IMR-90 (cell line): ENCODE measurements at regions of chr1 and their contacts with region 1.

Region 1: GRCh38 chr1:246012341-246012740 is 494.7 kb downstream of the SMYD3 start:
- DNase-seq: peak; percentile 51
- ATAC-seq: peak; percentile 53
- H3K4me3 ChIP-seq: no peak overlapping the region
- H3K27ac ChIP-seq: no peak overlapping the region
- H3K4me1 ChIP-seq: no peaks in the 10 kb centered on the region
- H3K27me3 ChIP-seq: no peaks in the 10 kb centered on the region
- CTCF ChIP-seq: peak; percentile 65
- POLR2A ChIP-seq: no peak
- RAD21 ChIP-seq: peak; percentile 68

Region 2: DNA sequence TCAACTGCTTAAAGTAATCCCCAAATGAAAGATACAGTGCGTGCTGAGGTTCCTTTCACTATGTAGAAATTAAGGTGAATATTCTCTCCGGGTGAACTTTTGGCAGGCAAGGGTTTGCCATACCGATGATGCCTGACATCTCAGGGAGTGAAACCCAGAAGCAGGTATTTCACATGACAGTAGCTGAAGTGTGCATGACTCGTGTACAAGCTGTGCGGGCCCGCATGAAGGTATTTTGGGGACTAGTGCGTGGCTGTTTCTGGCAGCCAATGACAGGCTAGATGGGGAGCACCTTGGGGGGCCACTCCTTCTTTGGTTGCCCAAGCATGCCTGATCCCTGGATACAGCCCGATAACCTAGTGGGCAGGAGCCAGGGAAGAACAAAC is 74.3 kb before region 1 on chr1:
- CTCF ChIA-PET with region 1: no interaction called
- POLR2A ChIA-PET with region 1: no interaction called
- dilution Hi-C with region 1: no loop called
- in situ Hi-C with region 1: no loop called
- intact Hi-C with region 1: no loop called
- DNase-seq: no peak
- ATAC-seq: no peak
- H3K4me3 ChIP-seq: no peak overlapping the region
- H3K27ac ChIP-seq: no peak overlapping the region
- H3K4me1 ChIP-seq: no peaks in the 10 kb centered on the region
- H3K27me3 ChIP-seq: no peaks in the 10 kb centered on the region
- CTCF ChIP-seq: no peak
- POLR2A ChIP-seq: no peak
- RAD21 ChIP-seq: no peak

Region 3: DNA sequence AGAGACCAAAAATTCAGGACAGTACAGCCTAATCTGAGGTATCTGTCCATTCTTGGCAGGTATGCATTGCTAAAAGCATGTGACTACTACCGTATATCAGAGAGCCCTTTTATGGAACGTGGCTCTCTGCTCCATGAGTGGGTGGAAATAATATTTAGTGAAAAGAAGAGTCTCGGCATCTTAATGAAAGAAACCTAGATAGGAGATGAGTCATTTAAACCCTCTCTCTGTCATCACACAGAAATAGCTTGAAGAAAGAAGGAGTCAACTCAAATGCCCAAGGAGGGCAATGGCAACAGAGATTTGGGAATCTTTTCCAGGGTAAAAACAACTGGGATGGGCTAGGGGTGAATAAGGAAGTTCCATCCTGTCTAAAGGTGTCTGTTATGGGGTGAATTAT is 33.4 kb before region 1 on chr1:
- CTCF ChIA-PET with region 1: no interaction called
- POLR2A ChIA-PET with region 1: no interaction called
- dilution Hi-C with region 1: no loop called
- in situ Hi-C with region 1: no loop called
- intact Hi-C with region 1: no loop called
- DNase-seq: peak; percentile 66
- ATAC-seq: peak; percentile 72
- H3K4me3 ChIP-seq: no peak overlapping the region
- H3K27ac ChIP-seq: no peak overlapping the region
- H3K4me1 ChIP-seq: peaks cover 13% of the 10 kb centered on the region
- H3K27me3 ChIP-seq: no peaks in the 10 kb centered on the region
- CTCF ChIP-seq: no peak
- POLR2A ChIP-seq: no peak
- RAD21 ChIP-seq: no peak

Region 4: DNA sequence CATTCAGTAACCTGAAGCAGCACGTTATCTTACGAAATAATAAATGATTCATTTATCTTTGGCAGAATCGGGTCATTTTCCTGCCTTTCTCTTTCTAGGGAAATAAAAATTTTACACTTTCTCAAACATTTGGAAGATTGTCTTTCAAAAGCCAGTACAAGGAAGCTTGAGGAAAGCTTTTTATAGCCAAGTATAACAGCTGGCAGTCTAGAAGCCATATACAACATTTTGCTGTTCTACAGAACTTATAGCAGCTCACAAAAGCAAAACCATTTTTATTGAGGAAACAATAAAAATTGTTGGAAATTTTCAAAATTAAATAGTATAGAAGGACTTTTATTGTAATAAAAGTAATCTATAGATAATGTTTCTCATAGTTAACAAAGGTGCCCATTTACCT is 46.1 kb after region 1 on chr1:
- CTCF ChIA-PET with region 1: no interaction called
- POLR2A ChIA-PET with region 1: no interaction called
- dilution Hi-C with region 1: no loop called
- in situ Hi-C with region 1: no loop called
- intact Hi-C with region 1: no loop called
- DNase-seq: peak; percentile 6
- ATAC-seq: no peak
- H3K4me3 ChIP-seq: no peak overlapping the region
- H3K27ac ChIP-seq: no peak overlapping the region
- H3K4me1 ChIP-seq: no peaks in the 10 kb centered on the region
- H3K27me3 ChIP-seq: no peaks in the 10 kb centered on the region
- CTCF ChIP-seq: no peak
- POLR2A ChIP-seq: no peak
- RAD21 ChIP-seq: no peak

Region 5: DNA sequence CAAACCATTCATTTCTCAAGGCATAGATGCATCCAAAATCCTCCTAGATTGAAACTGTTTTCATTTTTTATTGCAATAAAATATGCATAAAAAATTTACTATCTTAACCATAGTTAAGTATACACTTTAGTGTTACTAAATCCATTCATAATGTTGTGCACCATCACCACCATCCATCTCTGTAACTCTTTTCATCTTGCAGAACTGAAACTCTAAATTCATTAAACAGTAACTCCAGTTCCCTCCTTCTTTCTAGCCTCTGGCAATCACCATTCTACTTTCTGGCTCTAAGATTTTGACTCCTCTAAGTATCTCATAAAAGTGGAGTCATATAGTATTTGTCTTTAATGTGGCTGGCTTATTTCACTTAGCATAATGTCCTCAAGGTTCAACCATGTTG is 257.9 kb after region 1 on chr1:
- CTCF ChIA-PET with region 1: no interaction called
- POLR2A ChIA-PET with region 1: no interaction called
- dilution Hi-C with region 1: no loop called
- in situ Hi-C with region 1: loop called (anchors 10 kb)
- intact Hi-C with region 1: no loop called
- DNase-seq: no peak
- ATAC-seq: no peak
- H3K4me3 ChIP-seq: no peak overlapping the region
- H3K27ac ChIP-seq: no peak overlapping the region
- H3K4me1 ChIP-seq: no peaks in the 10 kb centered on the region
- H3K27me3 ChIP-seq: no peaks in the 10 kb centered on the region
- CTCF ChIP-seq: no peak
- POLR2A ChIP-seq: no peak
- RAD21 ChIP-seq: no peak

Region 6: GRCh38 chr1:246280551-246280950 is 268.2 kb after region 1 on chr1:
- CTCF ChIA-PET with region 1: interaction called, 6 read pairs
- POLR2A ChIA-PET with region 1: interaction called, 8 read pairs
- dilution Hi-C with region 1: no loop called
- in situ Hi-C with region 1: loop called (anchors 10 kb)
- intact Hi-C with region 1: loop called (anchors 5 kb)
- DNase-seq: peak; percentile 60
- ATAC-seq: peak; percentile 66; the same call in 1 of the 2 replicates
- H3K4me3 ChIP-seq: no peak overlapping the region
- H3K27ac ChIP-seq: no peak overlapping the region
- H3K4me1 ChIP-seq: peaks cover 3% of the 10 kb centered on the region; the same call in 1 of the 2 replicates
- H3K27me3 ChIP-seq: no peaks in the 10 kb centered on the region
- CTCF ChIP-seq: peak; percentile 56
- POLR2A ChIP-seq: no peak
- RAD21 ChIP-seq: peak; percentile 58